Activated CD4-positive, alpha-beta T cell treated with anti-CD3 and anti-CD28 coated beads, Interleukin-2, amount 10 ng/mL, durations not matched to agents 7 days and 5 days (primary cell): ENCODE measurements at regions of chr18 and their contacts with region 1.

Region 1: GRCh38 chr18:46073474-46074331 is 1.6 kb upstream of the PSTPIP2 start:
- DNase-seq: peak; percentile 78
- H3K4me3 Mint-ChIP-seq: no peak overlapping the region
- H3K27ac Mint-ChIP-seq: peak overlapping the region; percentile 11
- H3K4me1 Mint-ChIP-seq: peaks cover 27% of the 10 kb centered on the region
- H3K27me3 Mint-ChIP-seq: no peaks in the 10 kb centered on the region

Region 2: DNA sequence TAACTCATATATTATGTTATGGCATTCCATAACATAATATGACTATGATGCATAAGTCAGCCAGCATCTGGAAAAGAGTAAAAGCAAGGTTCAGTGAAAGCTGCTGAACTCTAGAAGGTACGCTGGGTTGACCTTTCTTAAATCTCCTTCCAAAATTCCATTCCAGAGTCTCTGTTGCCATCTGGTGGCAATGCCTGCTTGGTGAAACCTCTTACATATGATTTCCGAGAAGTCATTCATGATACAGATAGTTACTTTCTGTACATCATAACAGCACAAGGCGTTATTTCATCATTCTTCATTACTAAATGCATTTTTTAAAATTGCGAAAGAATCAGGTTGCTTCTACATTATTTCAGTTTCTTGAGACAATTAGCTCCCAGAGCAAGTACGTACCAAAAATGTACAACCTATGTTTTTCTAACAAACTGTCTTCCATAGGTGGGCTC is 99.6 kb before region 1 on chr18:
- CTCF ChIA-PET with region 1: interaction called, 10 read pairs
- POLR2A ChIA-PET with region 1: interaction called, 3 read pairs
- DNase-seq: peak; percentile 83
- H3K4me3 Mint-ChIP-seq: no peak overlapping the region
- H3K27ac Mint-ChIP-seq: peak overlapping the region; percentile 89
- H3K4me1 Mint-ChIP-seq: peaks cover 15% of the 10 kb centered on the region
- H3K27me3 Mint-ChIP-seq: no peaks in the 10 kb centered on the region

Region 3: GRCh38 chr18:46084431-46084830 is 10.7 kb after region 1 on chr18:
- CTCF ChIA-PET with region 1: interaction called, 17 read pairs
- POLR2A ChIA-PET with region 1: no interaction called
- DNase-seq: no peak
- H3K4me3 Mint-ChIP-seq: no peak overlapping the region
- H3K27ac Mint-ChIP-seq: no peak overlapping the region
- H3K4me1 Mint-ChIP-seq: peaks cover 5% of the 10 kb centered on the region
- H3K27me3 Mint-ChIP-seq: no peaks in the 10 kb centered on the region